Activated CD4-positive, alpha-beta T cell treated with anti-CD3 and anti-CD28 coated beads for 36 hours (primary cell): ENCODE measurements at regions of chr4 and their contacts with region 1.

Region 1: GRCh38 chr4:39044364-39044955 is 12.3 kb upstream of the TMEM156 start:
- DNase-seq: peak; percentile 99
- ATAC-seq: peak; percentile 87
- H3K4me3 Mint-ChIP-seq: peak overlapping the region; percentile 76
- H3K27ac Mint-ChIP-seq: peak overlapping the region; percentile 69
- H3K4me1 Mint-ChIP-seq: peaks cover 48% of the 10 kb centered on the region
- H3K27me3 Mint-ChIP-seq: no peaks in the 10 kb centered on the region

Region 2: DNA sequence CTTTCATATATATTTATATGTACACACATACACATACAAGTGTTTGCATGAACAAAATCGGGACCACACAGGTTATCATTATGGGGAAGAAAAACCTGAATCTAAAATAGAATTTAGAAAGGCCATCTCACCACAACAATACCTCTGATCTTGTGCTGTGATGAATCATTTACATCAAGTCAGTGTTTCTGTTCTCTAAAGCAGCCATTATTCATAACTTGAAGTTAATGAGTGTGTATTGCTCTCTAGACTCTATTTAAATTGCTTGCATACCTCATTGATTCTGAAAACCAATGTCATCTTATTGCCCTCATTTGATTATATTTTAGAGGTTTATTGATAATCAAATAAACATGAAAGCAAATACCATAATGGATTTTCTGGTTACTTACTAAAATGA is 105.3 kb before region 1 on chr4:
- CTCF ChIA-PET with region 1: interaction called, 3 read pairs
- POLR2A ChIA-PET with region 1: no interaction called
- intact Hi-C with region 1: loop called in 1 of 2 experiments (anchors 1 kb)
- DNase-seq: no peak
- ATAC-seq: peak; percentile 94
- H3K4me3 Mint-ChIP-seq: no peak overlapping the region
- H3K27ac Mint-ChIP-seq: peak overlapping the region; percentile 47
- H3K4me1 Mint-ChIP-seq: peaks cover 42% of the 10 kb centered on the region
- H3K27me3 Mint-ChIP-seq: no peaks in the 10 kb centered on the region

Region 3: DNA sequence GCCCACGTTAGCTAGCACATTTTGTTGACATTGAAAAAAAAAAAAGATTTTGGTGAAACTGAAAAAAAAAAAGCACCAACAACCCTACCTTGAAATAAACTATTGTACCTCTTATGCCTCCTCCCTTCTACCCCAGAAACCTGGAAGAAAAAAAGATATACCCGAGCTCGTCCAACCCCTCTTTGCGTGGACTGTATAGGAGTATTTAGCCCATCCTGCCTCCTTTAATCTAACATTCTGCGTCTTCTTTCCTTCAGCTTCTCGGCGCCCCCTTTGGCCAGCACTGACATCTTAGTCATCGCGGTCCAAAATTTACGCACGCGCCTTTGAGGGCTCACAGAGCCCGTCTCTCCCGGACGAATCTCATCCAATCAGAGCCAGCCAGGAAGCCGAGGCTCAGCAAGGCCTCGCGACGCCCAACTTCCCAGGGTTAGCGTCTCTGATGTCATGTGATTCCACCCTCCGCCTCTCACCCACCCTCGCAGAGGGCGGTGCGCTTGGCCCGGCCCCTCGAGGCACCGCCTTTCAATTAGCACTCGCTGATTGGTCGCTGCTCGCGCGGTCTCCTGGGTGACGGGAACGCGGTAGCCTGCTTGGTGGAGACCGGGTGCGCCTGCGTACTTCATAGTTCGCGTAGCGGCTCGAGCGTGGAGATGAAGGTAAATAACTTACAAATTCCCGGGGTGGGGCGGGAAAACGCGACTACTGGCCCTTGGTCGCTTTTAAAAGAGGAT is 137.6 kb after region 1 on chr4 and contains the start of gene WDR19:
- CTCF ChIA-PET with region 1: no interaction called
- POLR2A ChIA-PET with region 1: no interaction called
- intact Hi-C with region 1: loop called (anchors 1 to 5 kb)
- DNase-seq: peak; percentile 99
- ATAC-seq: peak; percentile 99
- H3K4me3 Mint-ChIP-seq: no peak within 1 kb of the TSS
- H3K27ac Mint-ChIP-seq: no peak within 1 kb of the TSS
- H3K4me1 Mint-ChIP-seq: peaks cover 8% of the 10 kb centered on the region
- H3K27me3 Mint-ChIP-seq: peaks cover 3% of the 10 kb centered on the region
- total RNA-seq, gene WDR19: 12.1 to 16.2 TPM

Region 4: DNA sequence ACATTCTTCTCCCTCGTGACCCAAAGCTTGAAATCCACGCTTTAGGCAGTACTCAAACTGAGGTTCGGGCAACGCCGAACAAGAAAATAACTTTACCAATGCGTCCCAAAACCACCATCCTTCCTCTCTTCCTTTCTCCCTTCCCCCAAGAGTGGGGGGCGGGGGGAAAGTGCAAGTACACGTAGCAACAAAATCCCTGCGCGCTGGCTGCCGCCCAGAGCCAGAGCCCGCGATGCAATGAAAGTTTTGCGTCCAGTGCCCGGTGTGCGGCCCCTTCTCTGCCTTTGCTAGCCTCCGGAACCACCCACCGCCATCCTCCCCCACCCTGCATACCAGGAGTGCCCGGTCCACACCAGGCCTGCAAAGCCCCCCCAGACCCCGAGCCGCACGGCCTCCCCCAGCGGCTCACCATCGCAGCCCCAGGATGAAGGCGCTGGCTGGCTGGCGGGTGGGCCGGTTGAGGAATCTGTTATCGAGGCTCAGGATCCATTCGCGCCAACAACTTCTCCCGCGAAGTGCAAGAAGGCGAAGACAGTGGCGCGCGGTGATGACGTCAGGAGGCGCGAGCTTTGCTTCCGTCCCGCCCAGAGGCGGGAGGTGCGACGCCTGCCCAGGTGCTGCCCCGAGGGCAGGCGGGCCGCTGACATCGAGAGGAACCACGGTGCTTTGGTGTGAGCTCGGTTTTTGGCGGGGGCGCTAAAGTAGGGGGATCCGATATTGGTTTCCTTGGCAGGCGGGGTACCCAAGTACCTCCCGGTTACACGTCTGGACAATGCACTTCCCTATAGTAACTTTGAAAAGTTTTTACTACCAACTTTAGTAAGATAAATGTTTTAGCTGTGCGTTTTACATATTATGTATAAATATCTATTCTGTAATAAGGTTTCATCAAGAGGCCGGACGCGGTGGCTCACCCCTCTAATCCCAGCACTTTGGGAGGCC is 321.6 kb after region 1 on chr4 and contains the start of gene RFC1:
- CTCF ChIA-PET with region 1: no interaction called
- POLR2A ChIA-PET with region 1: no interaction called
- intact Hi-C with region 1: loop called in 1 of 2 experiments (anchors 2 kb)
- DNase-seq: peak; percentile 97
- ATAC-seq: peak; percentile 90
- H3K4me3 Mint-ChIP-seq: peak within 1 kb of the TSS; percentile 98
- H3K27ac Mint-ChIP-seq: peak within 1 kb of the TSS; percentile 97
- H3K4me1 Mint-ChIP-seq: peaks cover 32% of the 10 kb centered on the region
- H3K27me3 Mint-ChIP-seq: no peaks in the 10 kb centered on the region
- total RNA-seq, gene RFC1: 112 to 216 TPM